MCF 10A (cell line): ENCODE measurements at regions of chr1 and their contacts with region 1.

Region 1: DNA sequence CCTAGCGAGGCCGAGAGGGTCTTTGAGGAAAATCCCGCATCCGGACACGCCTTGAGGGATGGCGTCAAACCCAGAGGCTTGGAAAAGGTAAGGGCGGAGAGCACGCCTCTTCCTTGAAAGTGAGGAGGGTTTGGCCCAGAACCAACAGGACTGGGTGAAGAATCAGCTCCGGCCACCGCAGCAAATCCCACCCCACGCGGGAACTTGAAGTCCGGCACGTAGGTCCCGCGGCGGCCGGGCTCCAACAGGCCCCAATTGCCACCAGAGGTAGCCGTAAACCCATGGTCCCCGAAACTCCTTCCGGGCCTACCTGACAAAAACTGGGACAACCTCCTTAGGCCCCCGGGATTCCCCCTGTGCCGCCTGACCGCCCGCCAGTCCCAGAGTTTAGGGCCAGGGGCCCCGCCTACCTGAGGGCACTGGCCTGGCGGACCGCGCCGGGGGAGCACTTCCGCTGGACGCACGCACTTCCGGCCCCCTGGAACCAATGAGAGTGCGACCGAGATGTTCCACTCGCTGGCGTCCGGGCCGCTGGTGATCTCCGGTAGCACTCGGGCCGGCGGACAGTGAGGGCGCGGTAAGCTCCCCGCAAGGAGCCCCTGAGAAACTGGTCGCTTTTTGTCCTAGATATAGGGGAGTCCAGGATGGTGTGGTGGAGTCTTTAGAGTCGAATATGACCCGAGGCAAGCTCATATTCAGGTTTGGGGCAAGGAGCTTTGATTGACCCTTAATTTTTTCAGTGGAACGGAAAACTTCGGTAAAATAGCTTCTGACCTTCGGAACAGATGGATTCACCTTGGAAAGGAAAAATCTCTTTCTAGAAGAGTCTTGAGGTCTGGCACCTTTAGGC is at the starts of genes LZIC and NMNAT1:
- DNase-seq: peak; percentile 93
- H3K4me3 Mint-ChIP-seq: peak within 1 kb of the TSS; percentile 98
- H3K27ac Mint-ChIP-seq: peak within 1 kb of the TSS; percentile 99
- H3K4me1 Mint-ChIP-seq: peaks cover 13% of the 10 kb centered on the region
- H3K27me3 Mint-ChIP-seq: no peaks in the 10 kb centered on the region
- CTCF ChIP-seq: no peak
- total RNA-seq, gene LZIC: 37.2 and 42.6 TPM in 2 replicates
- total RNA-seq, gene NMNAT1: 10.4 and 14.0 TPM in 2 replicates

Region 2: GRCh38 chr1:9874959-9875635 is 68.1 kb before region 1 on chr1:
- CTCF ChIA-PET with region 1: interaction called, 50 read pairs
- POLR2A ChIA-PET with region 1: interaction called, 19 read pairs
- intact Hi-C with region 1: loop called (anchors 1 kb)
- DNase-seq: peak; percentile 73
- H3K4me3 Mint-ChIP-seq: no peak overlapping the region
- H3K27ac Mint-ChIP-seq: no peak overlapping the region
- H3K4me1 Mint-ChIP-seq: peaks cover 11% of the 10 kb centered on the region
- H3K27me3 Mint-ChIP-seq: no peaks in the 10 kb centered on the region
- CTCF ChIP-seq: peak; percentile 88

Region 3: DNA sequence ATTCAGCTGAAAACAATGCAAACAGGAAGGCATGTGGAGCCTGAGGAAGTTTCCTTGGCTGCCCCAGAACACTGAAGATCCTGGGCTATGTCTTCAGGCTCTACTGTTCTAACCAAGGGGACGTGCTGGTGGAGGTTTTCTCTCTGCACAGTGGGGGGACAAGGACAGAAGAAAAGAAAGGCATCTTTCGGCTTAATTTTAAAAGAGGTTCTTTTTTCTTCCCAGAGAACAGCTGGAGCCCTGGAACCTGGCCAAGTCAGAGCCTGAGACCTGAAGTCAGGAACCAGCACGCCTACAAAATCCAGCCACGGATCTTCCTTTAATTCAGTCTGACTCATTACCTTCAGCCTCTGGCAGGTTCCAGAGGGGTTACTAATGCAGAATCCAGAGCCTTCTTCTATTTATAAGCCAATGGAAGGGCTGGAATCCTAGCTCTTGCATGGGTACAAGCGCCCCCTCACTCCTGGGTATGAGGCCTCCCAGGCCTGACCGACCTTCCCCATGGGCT is 52.9 kb before region 1 on chr1:
- CTCF ChIA-PET with region 1: interaction called, 3 read pairs
- POLR2A ChIA-PET with region 1: interaction called, 63 read pairs
- intact Hi-C with region 1: loop called (anchors 5 kb)
- DNase-seq: peak; percentile 96
- H3K4me3 Mint-ChIP-seq: peak overlapping the region; percentile 59
- H3K27ac Mint-ChIP-seq: peak overlapping the region; percentile 81
- H3K4me1 Mint-ChIP-seq: peaks cover 42% of the 10 kb centered on the region
- H3K27me3 Mint-ChIP-seq: no peaks in the 10 kb centered on the region
- CTCF ChIP-seq: no peak

Region 4: DNA sequence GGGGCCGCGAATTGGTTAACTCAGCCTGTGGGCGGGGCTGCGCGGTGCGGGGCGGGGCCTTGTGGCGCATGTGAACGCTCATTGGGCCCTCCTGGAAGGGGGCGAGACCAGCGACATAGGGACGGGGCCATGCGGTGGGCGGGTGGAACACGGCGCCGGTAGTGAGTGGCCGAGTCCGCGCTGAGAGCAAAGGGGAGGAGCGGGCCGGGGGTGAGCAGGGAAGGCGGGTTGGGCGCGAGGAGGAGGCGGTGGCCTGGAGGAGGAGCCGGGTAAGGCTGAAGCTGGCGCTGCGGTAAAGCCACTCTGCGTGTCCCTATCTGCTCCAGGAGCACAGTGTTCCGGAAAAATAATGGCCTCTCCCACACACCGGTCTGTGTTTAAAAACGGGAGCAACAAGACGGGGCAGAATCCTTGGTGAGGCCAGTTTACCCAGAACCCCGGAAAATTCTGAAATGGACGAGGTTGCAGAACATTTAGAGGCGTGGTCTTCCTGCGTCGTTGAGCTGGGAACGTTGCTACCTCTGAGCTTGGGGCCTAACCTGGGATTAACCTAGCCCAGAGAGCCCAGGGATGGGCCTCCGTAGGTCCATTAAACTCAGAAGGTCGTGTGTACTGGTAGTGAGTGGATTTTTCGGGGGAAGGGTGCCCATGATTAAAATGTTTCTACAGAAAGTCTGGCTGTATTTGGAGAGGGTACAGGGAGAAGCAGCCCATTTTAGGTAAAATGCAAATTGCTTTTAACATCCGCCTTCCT is 32.6 kb before region 1 on chr1:
- CTCF ChIA-PET with region 1: interaction called, 8 read pairs
- POLR2A ChIA-PET with region 1: interaction called, 24 read pairs
- intact Hi-C with region 1: no loop called
- DNase-seq: peak; percentile 99
- H3K4me3 Mint-ChIP-seq: peak overlapping the region; percentile 93
- H3K27ac Mint-ChIP-seq: peak overlapping the region; percentile 99
- H3K4me1 Mint-ChIP-seq: peaks cover 30% of the 10 kb centered on the region
- H3K27me3 Mint-ChIP-seq: no peaks in the 10 kb centered on the region
- CTCF ChIP-seq: no peak

Region 5: DNA sequence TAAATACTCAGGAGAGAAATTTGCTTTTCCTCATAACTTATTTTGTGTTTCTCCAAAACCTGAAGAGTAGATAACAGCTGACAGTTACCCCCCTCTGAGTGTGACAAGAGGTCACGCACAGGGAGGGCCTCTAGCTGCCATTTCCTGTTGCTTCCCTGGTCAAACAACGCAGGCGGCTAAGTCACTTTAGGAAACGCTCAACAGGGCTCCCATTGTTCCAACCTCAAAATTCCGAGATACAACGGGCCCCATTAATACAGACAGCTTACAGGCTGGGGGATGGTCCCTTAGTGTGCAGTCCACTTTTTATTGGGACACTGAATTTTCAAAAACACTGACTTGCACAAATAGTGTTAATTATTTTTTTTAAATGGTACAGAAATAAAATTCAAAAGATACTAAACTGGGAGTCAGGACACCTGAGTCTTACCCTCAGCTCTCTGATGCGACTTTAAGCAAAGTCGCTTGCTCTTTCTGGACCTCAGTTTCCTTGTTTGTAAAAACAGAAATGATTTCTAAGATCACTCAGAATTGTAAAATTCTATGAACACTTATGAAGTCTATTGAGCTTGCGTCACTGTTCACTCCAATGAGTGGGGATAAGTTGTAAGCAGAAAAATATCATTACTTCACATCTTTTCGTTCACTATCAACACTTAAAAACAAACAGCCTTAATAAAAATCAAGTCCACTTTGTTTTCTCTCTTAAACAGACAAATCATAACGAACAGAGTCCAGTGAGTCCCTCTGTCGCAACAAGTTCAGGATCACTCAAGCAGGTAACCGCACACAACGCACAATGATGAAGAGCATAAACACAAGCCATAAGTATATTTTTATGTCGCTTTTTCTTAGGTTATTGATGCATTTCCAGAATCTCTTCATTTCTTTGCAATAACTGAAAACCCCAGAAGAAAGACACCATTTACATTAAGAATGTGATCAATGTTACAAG is 13.5 kb before region 1 on chr1:
- CTCF ChIA-PET with region 1: interaction called, 7 read pairs
- POLR2A ChIA-PET with region 1: interaction called, 10 read pairs
- intact Hi-C with region 1: no loop called
- DNase-seq: no peak
- H3K4me3 Mint-ChIP-seq: no peak overlapping the region
- H3K27ac Mint-ChIP-seq: no peak overlapping the region
- H3K4me1 Mint-ChIP-seq: no peaks in the 10 kb centered on the region
- H3K27me3 Mint-ChIP-seq: no peaks in the 10 kb centered on the region
- CTCF ChIP-seq: no peak

Region 6: DNA sequence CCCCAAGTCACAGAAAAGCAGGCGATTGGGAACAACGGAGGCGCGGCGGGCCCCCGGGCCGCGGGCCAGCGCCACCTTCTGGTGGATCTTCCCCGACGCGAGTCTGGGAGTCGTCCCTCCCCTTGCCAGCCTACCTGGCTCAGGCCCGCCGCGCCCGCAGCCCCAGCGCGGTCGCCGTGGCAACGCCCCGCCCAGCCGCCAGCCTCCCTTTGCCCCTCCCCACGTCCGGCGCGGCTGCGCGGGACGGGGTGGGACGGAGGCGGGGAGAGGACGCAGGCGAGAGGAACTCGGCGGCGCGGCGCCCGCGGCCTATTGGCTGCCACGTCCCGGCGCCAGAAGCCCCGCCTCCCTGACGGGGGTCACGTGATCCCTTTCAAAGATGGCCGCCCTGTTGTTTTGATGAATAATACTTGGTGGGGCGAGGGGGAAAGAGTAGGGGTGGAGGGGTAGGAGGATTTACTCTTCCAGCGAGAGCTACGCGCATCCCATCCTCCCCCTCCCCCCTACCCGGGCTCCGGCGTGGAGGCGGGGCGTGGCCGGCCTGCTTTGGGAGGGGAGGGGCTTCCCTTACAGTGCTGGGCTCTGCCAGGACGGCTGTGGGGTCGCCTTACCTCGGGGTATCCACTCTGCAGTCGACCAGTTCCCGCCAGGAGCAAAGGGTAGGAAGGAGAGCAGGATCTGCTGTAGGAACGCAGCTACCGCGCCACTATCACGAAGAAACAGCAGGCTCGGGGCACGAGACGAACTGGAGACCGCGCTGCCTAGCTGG is 89.6 kb after region 1 on chr1 and contains the start of gene UBE4B:
- CTCF ChIA-PET with region 1: no interaction called
- POLR2A ChIA-PET with region 1: interaction called, 35 read pairs
- intact Hi-C with region 1: loop called (anchors 2 kb)
- DNase-seq: peak; percentile 98
- H3K4me3 Mint-ChIP-seq: peak within 1 kb of the TSS; percentile 80
- H3K27ac Mint-ChIP-seq: peak within 1 kb of the TSS; percentile 78
- H3K4me1 Mint-ChIP-seq: peaks cover 18% of the 10 kb centered on the region
- H3K27me3 Mint-ChIP-seq: no peaks in the 10 kb centered on the region
- CTCF ChIP-seq: peak; percentile 83
- total RNA-seq, gene UBE4B: 31.2 and 43.1 TPM in 2 replicates

Region 7: DNA sequence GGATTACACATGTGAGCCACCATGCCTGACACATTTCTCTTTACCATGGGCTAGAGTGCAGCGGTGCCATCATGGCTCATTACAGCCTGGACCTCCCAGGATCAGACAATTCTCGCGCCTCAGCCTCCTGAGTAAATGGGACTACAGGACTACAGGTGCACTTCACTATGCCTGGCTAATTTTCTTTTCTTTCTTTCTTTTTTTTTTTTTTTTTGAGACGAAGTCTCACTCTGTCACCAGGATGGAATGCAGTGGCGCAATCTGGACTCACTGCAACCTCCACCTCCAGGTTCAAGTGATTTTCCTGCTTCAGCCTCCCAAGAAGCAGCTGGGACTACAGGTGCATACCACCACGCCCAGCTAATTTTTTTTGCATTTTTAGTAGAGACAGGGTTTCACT is 252.4 kb after region 1 on chr1:
- CTCF ChIA-PET with region 1: no interaction called
- POLR2A ChIA-PET with region 1: no interaction called
- intact Hi-C with region 1: no loop called
- DNase-seq: peak; percentile 77
- H3K4me3 Mint-ChIP-seq: no peak overlapping the region
- H3K27ac Mint-ChIP-seq: no peak overlapping the region
- H3K4me1 Mint-ChIP-seq: no peaks in the 10 kb centered on the region
- H3K27me3 Mint-ChIP-seq: peaks cover 8% of the 10 kb centered on the region
- CTCF ChIP-seq: no peak

Region 8: GRCh38 chr1:10209905-10210810 is 267.0 kb after region 1 on chr1 and contains the start of gene KIF1B:
- CTCF ChIA-PET with region 1: no interaction called
- POLR2A ChIA-PET with region 1: interaction called, 13 read pairs
- intact Hi-C with region 1: no loop called
- DNase-seq: peak; percentile 97
- H3K4me3 Mint-ChIP-seq: peak within 1 kb of the TSS; percentile 98
- H3K27ac Mint-ChIP-seq: peak within 1 kb of the TSS; percentile 84
- H3K4me1 Mint-ChIP-seq: peaks cover 18% of the 10 kb centered on the region
- H3K27me3 Mint-ChIP-seq: no peaks in the 10 kb centered on the region
- CTCF ChIP-seq: peak; percentile 97
- total RNA-seq, gene KIF1B: 34.2 and 35.9 TPM in 2 replicates